H1 (cell line): ENCODE measurements at regions of chr5 and their contacts with region 1.

Region 1: DNA sequence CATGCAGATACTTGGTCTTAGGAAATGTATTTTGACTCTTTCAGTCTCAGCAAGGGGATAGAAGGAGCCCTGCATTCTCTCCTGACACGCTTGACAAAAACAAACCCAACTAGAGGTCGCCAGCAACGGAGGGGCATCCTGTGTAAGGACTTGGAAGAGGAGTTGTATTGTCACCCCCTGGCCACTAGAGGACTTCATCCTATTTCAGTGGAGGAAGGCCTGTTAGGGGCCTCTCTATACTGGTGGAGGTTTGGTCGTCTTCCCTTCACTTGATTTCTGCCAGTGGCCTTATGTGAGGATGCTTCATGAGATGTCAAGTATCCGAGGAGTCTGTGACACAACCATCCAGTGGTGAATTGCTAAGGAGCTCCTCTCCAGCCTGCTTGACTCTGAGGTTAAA is 122.8 kb upstream of the STC2 start:
- DNase-seq: peak; percentile 3 to 61
- H3K4me3 ChIP-seq: no peak overlapping the region
- H3K27ac ChIP-seq: no peak overlapping the region
- H3K4me1 ChIP-seq: no peaks in the 10 kb centered on the region
- H3K27me3 ChIP-seq: no peaks in the 10 kb centered on the region
- CTCF ChIP-seq: peak; percentile 53 to 82 (median 65); a peak in 3 of 4 replicates
- EP300 ChIP-seq: no peak
- POLR2A ChIP-seq: no peak
- RAD21 ChIP-seq: peak; percentile 52 to 64

Region 2: DNA sequence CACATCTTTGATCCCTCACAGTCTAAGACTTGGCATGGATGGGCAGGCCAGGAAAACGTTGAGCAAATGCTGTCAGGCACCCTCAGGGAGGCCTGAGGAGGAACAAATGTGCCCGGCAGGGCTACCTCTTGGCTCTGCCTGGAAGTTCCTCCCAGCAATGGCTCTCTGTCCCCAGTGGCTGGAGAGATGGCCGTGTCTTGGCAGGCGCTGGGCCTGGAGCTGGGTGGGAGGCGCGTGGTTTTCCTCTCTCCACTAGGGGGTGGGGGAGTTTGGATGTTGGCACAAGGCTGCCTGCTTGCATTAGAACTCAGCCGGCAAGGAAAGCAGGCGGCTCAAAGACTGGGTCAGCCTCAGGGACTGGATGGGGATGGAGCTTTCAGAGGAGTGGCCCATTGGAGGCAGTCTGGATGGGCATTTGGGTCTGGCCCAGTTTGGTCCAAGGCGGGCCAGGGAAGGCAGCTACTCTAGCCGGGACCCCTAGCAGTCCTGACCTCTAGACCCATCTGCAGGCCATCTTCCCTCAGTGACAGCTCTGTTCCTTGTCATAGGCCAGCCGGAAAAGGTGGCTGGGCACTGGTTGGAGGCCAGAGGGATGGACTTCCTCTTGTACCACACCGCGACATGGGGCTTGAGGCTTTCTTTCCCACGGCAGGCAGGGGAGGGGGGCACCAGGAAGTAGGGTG is 54.6 kb before region 1 on chr5:
- CTCF ChIA-PET with region 1: interaction called, 11 read pairs
- POLR2A ChIA-PET with region 1: no interaction called
- DNase-seq: peak; percentile 21 to 76
- H3K4me3 ChIP-seq: no peak overlapping the region
- H3K27ac ChIP-seq: no peak overlapping the region
- H3K4me1 ChIP-seq: no peaks in the 10 kb centered on the region
- H3K27me3 ChIP-seq: peaks cover 0 to 1% (median 0%) of the 10 kb centered on the region in 4 experiments; a peak in 1 of 7 replicates
- CTCF ChIP-seq: peak; percentile 67 to 73 (median 71)
- EP300 ChIP-seq: no peak
- POLR2A ChIP-seq: no peak
- RAD21 ChIP-seq: peak; percentile 61 to 73

Region 3: DNA sequence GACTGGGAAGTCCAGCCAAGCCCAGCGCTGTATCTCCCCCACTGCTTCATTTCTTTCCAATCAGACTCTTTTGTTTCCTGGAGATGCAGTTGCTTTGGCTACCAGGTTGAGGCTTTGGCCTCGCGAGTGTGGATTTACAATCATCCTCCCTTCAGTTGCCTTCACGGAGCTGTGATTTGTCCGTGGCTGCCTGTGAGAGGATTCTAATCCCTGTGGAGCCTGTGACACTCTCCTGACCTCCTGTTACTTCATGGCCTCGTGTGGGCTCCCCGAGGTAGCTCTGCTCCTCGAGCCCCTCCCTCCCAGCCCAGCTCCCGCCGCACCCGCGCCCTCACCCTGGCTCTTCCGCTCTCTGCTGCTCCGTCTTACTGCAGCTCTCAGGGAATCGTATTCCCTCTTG is 15.6 kb before region 1 on chr5:
- CTCF ChIA-PET with region 1: interaction called, 20 read pairs
- POLR2A ChIA-PET with region 1: no interaction called
- DNase-seq: peak in 1 of 2 experiments; percentile 43
- H3K4me3 ChIP-seq: no peak overlapping the region
- H3K27ac ChIP-seq: no peak overlapping the region
- H3K4me1 ChIP-seq: no peaks in the 10 kb centered on the region
- H3K27me3 ChIP-seq: peaks cover 0 to 5% (median under 1%) of the 10 kb centered on the region in 4 experiments; a peak in 1 of 7 replicates
- CTCF ChIP-seq: no peak
- EP300 ChIP-seq: no peak
- POLR2A ChIP-seq: no peak
- RAD21 ChIP-seq: no peak

Region 4: GRCh38 chr5:173484569-173484968 is 33.5 kb after region 1 on chr5:
- CTCF ChIA-PET with region 1: interaction called, 13 read pairs
- POLR2A ChIA-PET with region 1: no interaction called
- DNase-seq: no peak
- H3K4me3 ChIP-seq: no peak overlapping the region
- H3K27ac ChIP-seq: no peak overlapping the region
- H3K4me1 ChIP-seq: no peaks in the 10 kb centered on the region
- H3K27me3 ChIP-seq: no peaks in the 10 kb centered on the region
- CTCF ChIP-seq: peak in 2 of 3 experiments; percentile 12 to 36; a peak in 2 of 4 replicates
- EP300 ChIP-seq: no peak
- POLR2A ChIP-seq: no peak
- RAD21 ChIP-seq: no peak